ENCODE measurements at regions of chr7 and their contacts with region 1.

Region 1: GRCh38 chr7:149460493-149461277 is at the start of gene ZNF777:
- DNase-seq: peak; percentile 89
- ATAC-seq: peak; percentile 98
- H3K4me3 Mint-ChIP-seq: peak within 1 kb of the TSS; percentile 82
- H3K27ac Mint-ChIP-seq: peak within 1 kb of the TSS; percentile 80
- H3K4me1 Mint-ChIP-seq: peaks cover 23% of the 10 kb centered on the region
- H3K27me3 Mint-ChIP-seq: peaks cover 18% of the 10 kb centered on the region
- total RNA-seq, gene ZNF777: 12.9 to 13.1 TPM

Region 2: DNA sequence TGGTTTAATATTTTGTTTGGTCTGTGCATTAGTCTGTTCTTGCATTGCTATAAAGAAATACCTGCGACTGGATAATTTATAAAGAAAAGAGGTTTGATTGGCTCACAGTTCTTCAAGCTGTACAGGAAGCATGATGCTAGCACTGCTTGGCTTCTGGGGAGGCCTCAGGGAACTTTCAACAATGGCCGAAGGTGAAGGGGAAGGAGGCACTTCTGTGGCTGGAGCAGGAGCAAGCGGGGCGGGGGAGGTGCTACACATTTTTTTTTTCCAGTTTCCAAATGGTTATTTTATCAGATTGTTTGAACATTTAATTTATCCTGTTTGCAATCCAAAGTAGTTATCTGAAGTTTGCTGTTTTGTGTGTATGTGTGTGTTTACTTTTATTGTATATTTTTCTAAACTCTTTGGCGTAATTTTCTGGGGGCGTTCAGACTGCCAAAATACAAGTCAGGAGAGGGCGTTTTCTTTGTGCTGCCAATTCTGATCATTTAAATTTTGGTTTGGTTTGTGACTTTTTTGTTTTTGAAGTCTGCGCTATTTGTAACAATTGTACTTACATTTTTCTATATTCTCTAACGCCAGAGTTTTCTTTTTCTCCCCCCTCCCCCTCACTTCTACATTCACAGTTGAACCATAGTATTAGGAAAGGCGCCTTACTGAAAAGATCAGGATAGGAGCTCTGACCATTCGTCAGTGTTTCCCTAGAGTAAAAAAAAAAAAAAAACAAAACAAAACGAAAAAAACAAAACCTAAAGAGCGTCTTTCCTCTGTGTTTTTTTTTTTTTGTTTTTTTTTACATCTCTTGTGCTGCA is 140.2 kb before region 1 on chr7:
- CTCF ChIA-PET with region 1: no interaction called
- POLR2A ChIA-PET with region 1: no interaction called
- DNase-seq: no peak
- ATAC-seq: no peak
- H3K4me3 Mint-ChIP-seq: no peak overlapping the region
- H3K27ac Mint-ChIP-seq: no peak overlapping the region
- H3K4me1 Mint-ChIP-seq: peaks cover 10% of the 10 kb centered on the region
- H3K27me3 Mint-ChIP-seq: peaks cover 14% of the 10 kb centered on the region

Region 3: GRCh38 chr7:149422129-149422913 is 38.4 kb before region 1 on chr7:
- CTCF ChIA-PET with region 1: interaction called, 14 read pairs
- POLR2A ChIA-PET with region 1: interaction called, 5 read pairs
- DNase-seq: peak; percentile 72
- ATAC-seq: peak; percentile 99
- H3K4me3 Mint-ChIP-seq: peak overlapping the region; percentile 71
- H3K27ac Mint-ChIP-seq: peak overlapping the region; percentile 52
- H3K4me1 Mint-ChIP-seq: peaks cover 9% of the 10 kb centered on the region
- H3K27me3 Mint-ChIP-seq: peaks cover 3% of the 10 kb centered on the region

Region 4: GRCh38 chr7:149680331-149681025 is 219.8 kb after region 1 on chr7:
- CTCF ChIA-PET with region 1: no interaction called
- POLR2A ChIA-PET with region 1: no interaction called
- DNase-seq: no peak
- ATAC-seq: no peak
- H3K4me3 Mint-ChIP-seq: no peak overlapping the region
- H3K27ac Mint-ChIP-seq: no peak overlapping the region
- H3K4me1 Mint-ChIP-seq: no peaks in the 10 kb centered on the region
- H3K27me3 Mint-ChIP-seq: peaks cover 21% of the 10 kb centered on the region

Measured in activated CD8-positive, alpha-beta T cell treated with anti-CD3 and anti-CD28 coated beads, Interleukin-2, amount 10 ng/mL, durations not matched to agents 7 days and 5 days (primary cell).